PC-3 (cell line): ENCODE measurements at regions of chr15 and their contacts with region 1.

Region 1: DNA sequence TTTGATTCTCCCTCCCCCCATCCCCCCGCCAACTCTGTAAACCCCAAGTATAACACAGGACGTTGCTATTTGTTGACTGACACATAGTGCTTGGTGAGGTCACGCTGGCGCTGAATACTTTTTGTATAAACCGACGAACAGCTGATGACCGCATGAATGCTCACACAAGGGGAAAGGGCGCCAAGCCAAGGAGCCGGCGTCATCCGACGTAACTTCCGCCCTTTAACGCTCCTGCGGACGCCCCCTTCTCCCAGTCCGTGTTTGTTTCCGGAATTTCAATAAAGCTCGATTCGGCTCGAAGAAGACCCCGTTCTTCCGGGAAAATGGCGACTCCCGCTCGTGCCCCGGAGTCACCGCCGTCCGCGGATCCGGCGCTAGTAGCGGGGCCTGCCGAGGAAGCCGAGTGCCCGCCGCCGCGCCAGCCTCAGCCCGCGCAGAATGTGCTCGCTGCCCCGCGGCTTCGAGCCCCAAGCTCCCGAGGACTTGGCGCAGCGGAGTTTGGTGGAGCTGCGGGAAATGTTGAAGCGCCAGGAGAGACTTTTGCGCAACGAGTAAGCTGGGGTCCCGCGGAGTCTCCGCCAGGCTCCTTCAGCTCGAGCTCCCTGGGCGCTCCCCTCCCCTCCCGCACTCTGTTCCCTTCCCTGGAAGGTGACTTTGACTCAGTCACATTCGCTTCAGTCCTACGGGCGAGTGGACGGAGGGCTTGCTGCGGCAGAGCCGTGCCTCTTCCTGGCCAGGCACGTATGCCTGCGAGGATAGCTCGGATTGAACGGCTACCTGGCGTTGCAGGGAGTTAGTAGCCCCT is at the start of gene POLR2M:
- DNase-seq: peak; percentile 97
- ATAC-seq: peak; percentile 79
- H3K4me3 ChIP-seq: peak within 1 kb of the TSS; percentile 94
- H3K27ac ChIP-seq: peak within 1 kb of the TSS; percentile 78
- H3K4me1 ChIP-seq: peaks cover 31% of the 10 kb centered on the region
- H3K27me3 ChIP-seq: no peaks in the 10 kb centered on the region
- CTCF ChIP-seq: no peak
- total RNA-seq, gene POLR2M: 487 and 769 TPM in 2 replicates

Region 2: GRCh38 chr15:57561041-57561711 is 145.4 kb before region 1 on chr15:
- CTCF ChIA-PET with region 1: no interaction called
- POLR2A ChIA-PET with region 1: no interaction called
- intact Hi-C with region 1: loop called (anchors 2 kb)
- DNase-seq: peak; percentile 78
- ATAC-seq: peak; percentile 91
- H3K4me3 ChIP-seq: no peak overlapping the region; the same call in 1 of the 2 replicates
- H3K27ac ChIP-seq: peak overlapping the region; percentile 90
- H3K4me1 ChIP-seq: peaks cover 29% of the 10 kb centered on the region
- H3K27me3 ChIP-seq: no peaks in the 10 kb centered on the region
- CTCF ChIP-seq: peak; percentile 88

Region 3: GRCh38 chr15:57667171-57667849 is 39.3 kb before region 1 on chr15:
- CTCF ChIA-PET with region 1: no interaction called
- POLR2A ChIA-PET with region 1: no interaction called
- intact Hi-C with region 1: loop called (anchors 2 kb)
- DNase-seq: peak; percentile 65
- ATAC-seq: peak; percentile 93
- H3K4me3 ChIP-seq: peak overlapping the region; percentile 31; the same call in 1 of the 2 replicates
- H3K27ac ChIP-seq: no peak overlapping the region
- H3K4me1 ChIP-seq: 0 out of 2 replicates have a peak, but pooled peaks cover under 1% of the 10 kb centered on the region
- H3K27me3 ChIP-seq: no peaks in the 10 kb centered on the region
- CTCF ChIP-seq: peak; percentile 63

Region 4: DNA sequence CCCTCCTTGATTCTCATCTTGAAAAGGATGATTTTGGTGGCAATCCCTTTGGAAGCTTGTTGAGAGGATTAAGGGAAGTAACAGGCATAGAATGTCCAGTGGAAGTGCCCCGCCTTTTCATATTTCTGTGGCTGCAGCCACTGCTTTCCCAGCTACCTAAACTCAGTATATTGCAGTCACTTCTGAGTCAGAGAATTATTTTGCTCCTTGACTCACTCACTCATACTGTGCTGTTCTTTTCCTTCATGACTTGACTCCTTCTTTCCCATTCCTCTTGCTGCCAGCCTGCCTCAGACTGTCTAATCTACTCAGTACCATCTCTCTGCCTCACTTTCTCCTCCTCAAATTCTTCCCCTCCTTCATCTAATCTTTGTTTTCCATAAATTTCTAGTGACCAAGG is 26.6 kb before region 1 on chr15:
- CTCF ChIA-PET with region 1: no interaction called
- POLR2A ChIA-PET with region 1: no interaction called
- intact Hi-C with region 1: loop called (anchors 2 kb)
- DNase-seq: peak; percentile 71
- ATAC-seq: peak; percentile 95
- H3K4me3 ChIP-seq: no peak overlapping the region
- H3K27ac ChIP-seq: peak overlapping the region; percentile 49
- H3K4me1 ChIP-seq: peaks cover 24% of the 10 kb centered on the region
- H3K27me3 ChIP-seq: no peaks in the 10 kb centered on the region
- CTCF ChIP-seq: no peak

Region 5: GRCh38 chr15:58077427-58077826 is 370.8 kb after region 1 on chr15:
- CTCF ChIA-PET with region 1: no interaction called
- POLR2A ChIA-PET with region 1: interaction called, 11 read pairs
- intact Hi-C with region 1: no loop called
- DNase-seq: peak; percentile 40
- ATAC-seq: peak; percentile 82
- H3K4me3 ChIP-seq: no peak overlapping the region
- H3K27ac ChIP-seq: no peak overlapping the region
- H3K4me1 ChIP-seq: no peaks in the 10 kb centered on the region
- H3K27me3 ChIP-seq: peaks cover 21% of the 10 kb centered on the region; the same call in 1 of the 2 replicates
- CTCF ChIP-seq: peak; percentile 57